Right ventricle myocardium inferior (tissue), 1 donor: ENCODE measurements at regions of chr11 and their contacts with region 1.

Region 1: DNA sequence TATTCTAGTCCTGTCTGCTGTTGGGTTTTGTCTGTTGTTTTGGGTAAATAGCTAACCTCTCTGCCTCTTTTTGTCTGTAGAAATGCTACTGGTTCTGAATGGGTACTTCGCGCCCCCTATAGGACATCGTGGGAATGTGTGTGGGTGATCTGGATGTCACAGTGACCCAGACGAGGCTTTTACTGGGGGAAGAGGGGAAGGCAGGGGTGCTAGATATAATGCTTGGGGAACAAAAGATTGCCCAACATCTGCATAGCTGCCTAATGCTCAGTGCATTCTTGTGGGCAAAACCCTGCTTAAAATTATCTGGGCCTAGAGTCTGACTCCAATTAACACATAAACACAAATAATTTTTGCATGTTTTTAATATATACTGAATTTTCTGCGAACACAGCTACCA is 57.7 kb downstream of the BMAL1 start:
- DNase-seq: no peak
- ATAC-seq: no peak

Region 2: DNA sequence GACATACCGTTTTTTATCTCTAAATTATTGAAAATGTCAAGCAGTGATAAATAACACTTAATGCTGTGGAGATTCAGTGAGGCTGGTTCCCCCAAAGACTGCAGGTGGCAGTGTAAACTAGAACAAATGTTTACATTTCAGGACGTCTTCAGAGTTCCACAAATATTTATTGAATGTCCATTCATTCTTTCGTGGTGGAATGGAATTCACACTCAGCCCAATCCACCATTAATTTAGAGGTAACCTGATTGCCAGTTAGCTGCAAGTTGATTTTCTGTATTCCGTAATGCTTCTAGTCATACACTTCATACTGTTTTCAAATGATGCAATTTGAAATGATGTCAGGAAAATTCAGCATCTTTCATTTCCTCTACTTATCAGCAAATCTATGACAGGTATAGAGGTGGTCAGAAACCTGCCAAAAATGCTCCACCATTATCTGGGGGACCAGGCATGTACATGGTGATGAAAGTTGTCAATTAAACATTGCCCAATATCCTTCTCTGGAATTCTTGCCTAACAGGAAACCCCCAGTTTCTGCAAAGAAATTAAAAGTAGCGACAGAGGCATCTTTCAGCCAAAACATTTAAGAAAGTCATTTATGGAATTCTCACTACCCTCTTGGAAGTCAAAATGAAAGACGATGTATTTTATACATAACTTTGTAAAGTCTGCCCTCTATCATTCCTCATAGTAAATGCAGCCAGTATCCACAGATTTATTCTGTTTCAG is 152.1 kb before region 1 on chr11:
- intact Hi-C with region 1: no loop called
- DNase-seq: no peak
- ATAC-seq: no peak

Region 3: GRCh38 chr11:13210424-13210823 is 124.9 kb before region 1 on chr11:
- intact Hi-C with region 1: loop called (anchors 2 kb)
- DNase-seq: no peak
- ATAC-seq: peak; percentile 64

Region 4: DNA sequence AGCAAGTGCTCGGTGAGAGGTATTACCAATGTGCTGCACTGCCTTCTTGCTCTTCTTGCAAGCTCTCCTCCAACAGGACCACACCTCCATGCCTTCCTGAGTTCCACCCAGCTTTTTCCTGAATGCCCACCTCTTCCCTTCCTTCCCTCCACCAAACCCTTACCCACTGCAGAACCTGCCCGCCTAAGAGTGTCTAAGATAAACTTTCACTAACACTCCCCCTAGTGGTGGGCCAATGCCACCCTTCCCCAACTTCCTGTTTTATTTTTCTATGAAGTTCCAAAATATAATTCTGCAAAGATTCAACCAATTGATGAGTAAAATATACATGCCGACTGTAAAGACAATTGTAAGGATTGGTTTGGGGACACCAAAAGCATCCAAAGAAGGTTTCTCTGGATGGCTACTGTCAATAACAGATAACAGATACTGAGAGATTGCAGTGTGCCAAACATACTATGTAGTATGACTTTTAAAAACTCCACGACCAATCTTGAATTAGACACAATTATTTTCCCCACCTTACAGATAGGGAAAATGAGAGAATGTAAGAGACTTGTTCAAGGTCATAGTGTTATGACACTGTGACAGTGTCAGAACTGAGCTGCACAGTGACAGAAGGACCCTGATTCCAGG is 96.3 kb before region 1 on chr11:
- intact Hi-C with region 1: loop called (anchors 1 kb)
- DNase-seq: no peak
- ATAC-seq: no peak

Region 5: GRCh38 chr11:13423372-13423771 is 88.1 kb after region 1 on chr11:
- intact Hi-C with region 1: no loop called
- DNase-seq: no peak
- ATAC-seq: no peak